Body of pancreas (tissue), 4 donors: ENCODE measurements at regions of chr2 and their contacts with region 1.

Region 1: GRCh38 chr2:36667931-36668330 is 28.6 kb upstream of the VIT start:
- DNase-seq: no peak
- ATAC-seq: no peak
- H3K4me3 ChIP-seq: no peak overlapping the region
- H3K27ac ChIP-seq: no peak overlapping the region
- H3K4me1 ChIP-seq: no peaks in the 10 kb centered on the region
- H3K27me3 ChIP-seq: no peaks in the 10 kb centered on the region
- CTCF ChIP-seq: no peak
- POLR2A ChIP-seq: no peak

Region 2: DNA sequence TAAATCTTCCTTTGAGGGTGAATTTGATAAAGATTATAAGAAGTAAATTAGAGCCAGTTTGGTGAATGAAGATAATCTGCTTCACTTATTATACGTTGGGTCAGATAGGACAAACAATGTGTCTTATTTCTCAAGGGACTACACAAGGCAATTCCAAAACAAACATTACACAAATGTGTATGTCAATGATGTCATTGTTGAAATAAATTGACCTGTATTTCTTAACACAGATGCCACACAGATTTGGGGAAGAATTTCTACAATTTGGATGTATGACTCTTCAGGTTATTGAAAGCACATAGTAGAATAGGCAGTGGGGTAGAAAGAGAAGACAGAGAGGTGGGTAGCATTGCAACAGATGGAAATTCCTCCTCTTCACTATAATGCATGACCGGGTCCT is 319.2 kb before region 1 on chr2:
- intact Hi-C with region 1: loop called (anchors 5 kb)
- DNase-seq: no peak
- ATAC-seq: no peak
- H3K4me3 ChIP-seq: no peak overlapping the region
- H3K27ac ChIP-seq: no peak overlapping the region
- H3K4me1 ChIP-seq: no peaks in the 10 kb centered on the region
- H3K27me3 ChIP-seq: no peaks in the 10 kb centered on the region
- CTCF ChIP-seq: no peak
- POLR2A ChIP-seq: no peak

Region 3: DNA sequence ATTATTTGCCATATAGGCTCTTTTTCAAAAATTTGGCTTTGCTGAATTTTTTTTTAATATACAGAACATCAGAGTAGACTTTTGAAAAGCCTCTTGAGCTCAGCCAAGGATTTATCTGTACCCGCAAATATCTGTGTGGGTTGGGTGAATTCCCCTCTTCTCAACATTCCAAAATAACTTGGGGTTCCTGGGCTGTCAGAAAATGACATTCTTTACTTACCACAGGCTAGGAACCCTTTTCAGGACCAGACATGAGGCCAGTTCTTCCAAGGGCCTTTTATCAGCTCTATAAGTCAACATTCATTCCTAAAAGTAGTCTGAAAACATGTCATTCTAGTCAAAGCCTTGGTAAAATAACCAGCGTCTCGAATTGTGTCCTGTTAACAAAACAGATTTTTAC is 41.2 kb before region 1 on chr2:
- intact Hi-C with region 1: no loop called
- DNase-seq: no peak
- ATAC-seq: no peak
- H3K4me3 ChIP-seq: no peak overlapping the region
- H3K27ac ChIP-seq: no peak overlapping the region
- H3K4me1 ChIP-seq: no peaks in the 10 kb centered on the region
- H3K27me3 ChIP-seq: no peaks in the 10 kb centered on the region
- CTCF ChIP-seq: no peak
- POLR2A ChIP-seq: no peak

Region 4: GRCh38 chr2:36731941-36732648 is 64.2 kb after region 1 on chr2:
- intact Hi-C with region 1: no loop called
- DNase-seq: no peak
- ATAC-seq: no peak
- H3K4me3 ChIP-seq: no peak overlapping the region
- H3K27ac ChIP-seq: no peak overlapping the region
- H3K4me1 ChIP-seq: no peaks in the 10 kb centered on the region
- H3K27me3 ChIP-seq: no peaks in the 10 kb centered on the region
- CTCF ChIP-seq: no peak
- POLR2A ChIP-seq: no peak